CD8-positive, alpha-beta T cell (primary cell): ENCODE measurements at regions of chr4 and their contacts with region 1.

Region 1: DNA sequence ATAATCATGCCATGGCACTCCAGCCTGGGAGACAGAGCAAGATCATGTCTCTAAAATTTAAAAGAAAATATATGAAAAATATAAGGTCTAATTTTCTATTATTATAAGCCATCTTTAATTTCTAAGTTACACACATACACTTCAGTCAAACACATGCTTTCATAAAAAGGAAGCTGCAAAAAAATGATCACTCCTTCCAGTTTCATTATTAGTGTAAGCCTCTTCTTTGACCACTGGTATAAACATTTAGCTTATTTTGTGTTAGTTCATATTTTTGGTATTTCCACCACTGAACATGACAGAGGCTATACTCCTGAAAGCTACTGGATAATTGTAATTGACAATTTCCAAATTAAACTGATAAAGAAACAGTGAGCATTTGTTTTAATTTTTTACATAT is 163.3 kb upstream of the USP38 start:
- DNase-seq: no peak
- ATAC-seq: no peak
- H3K4me3 ChIP-seq: no peak overlapping the region
- H3K4me3 Mint-ChIP-seq: no peak overlapping the region
- H3K27ac ChIP-seq: no peak overlapping the region
- H3K27ac Mint-ChIP-seq: no peak overlapping the region
- H3K4me1 ChIP-seq: no peaks in the 10 kb centered on the region
- H3K4me1 Mint-ChIP-seq: no peaks in the 10 kb centered on the region
- H3K27me3 ChIP-seq: no peaks in the 10 kb centered on the region
- H3K27me3 Mint-ChIP-seq: no peaks in the 10 kb centered on the region
- CTCF ChIP-seq: no peak

Region 2: DNA sequence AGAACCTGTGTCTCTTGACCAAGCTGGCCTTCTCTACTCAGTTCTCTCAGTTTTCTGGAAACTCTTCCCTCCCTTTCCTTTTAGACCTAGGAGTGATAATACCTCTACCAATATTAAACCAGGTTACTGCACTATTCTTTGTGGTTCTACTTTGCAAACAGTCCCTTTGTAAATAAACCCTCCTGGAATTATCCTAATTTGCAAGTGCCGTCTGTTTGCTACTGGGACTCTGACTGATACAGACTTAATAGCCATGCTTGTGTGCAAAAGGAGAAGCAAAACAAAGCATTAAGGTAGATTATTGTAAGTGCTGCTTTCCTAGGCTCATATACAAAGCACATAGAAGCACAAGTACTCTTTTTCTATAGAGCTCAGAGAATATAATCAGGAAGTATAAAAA is 682.3 kb before region 1 on chr4:
- CTCF ChIA-PET with region 1: no interaction called
- POLR2A ChIA-PET with region 1: no interaction called
- intact Hi-C with region 1: no loop called
- DNase-seq: no peak
- ATAC-seq: no peak
- H3K4me3 ChIP-seq: no peak overlapping the region
- H3K4me3 Mint-ChIP-seq: no peak overlapping the region
- H3K27ac ChIP-seq: no peak overlapping the region
- H3K27ac Mint-ChIP-seq: no peak overlapping the region
- H3K4me1 ChIP-seq: no peaks in the 10 kb centered on the region
- H3K4me1 Mint-ChIP-seq: peaks cover 38% of the 10 kb centered on the region
- H3K27me3 ChIP-seq: no peaks in the 10 kb centered on the region
- H3K27me3 Mint-ChIP-seq: no peaks in the 10 kb centered on the region
- CTCF ChIP-seq: no peak

Region 3: DNA sequence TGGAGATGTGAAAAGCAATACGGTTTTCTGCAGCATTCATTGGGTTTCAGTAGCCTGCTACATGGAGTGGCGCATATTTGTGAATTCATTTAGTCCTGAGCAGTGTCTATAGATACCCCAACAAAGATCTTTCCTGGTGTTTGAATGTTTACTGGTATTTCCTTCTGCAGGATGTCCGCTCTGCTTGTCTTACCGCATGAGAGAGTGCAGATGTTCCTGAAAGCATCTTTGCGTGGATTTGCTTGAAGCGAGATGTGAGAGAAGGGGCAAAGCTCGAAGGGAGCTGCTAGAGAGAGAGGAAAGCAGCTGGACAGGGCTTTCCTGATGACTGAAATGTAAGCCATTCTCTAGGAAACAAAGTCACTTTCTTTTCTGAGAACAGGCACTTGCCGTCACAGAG is 1160.0 kb after region 1 on chr4:
- CTCF ChIA-PET with region 1: no interaction called
- POLR2A ChIA-PET with region 1: no interaction called
- intact Hi-C with region 1: loop called in 1 of 2 experiments (anchors 5 kb)
- DNase-seq: no peak
- ATAC-seq: no peak
- H3K4me3 ChIP-seq: no peak overlapping the region
- H3K4me3 Mint-ChIP-seq: no peak overlapping the region
- H3K27ac ChIP-seq: no peak overlapping the region
- H3K27ac Mint-ChIP-seq: no peak overlapping the region
- H3K4me1 ChIP-seq: no peaks in the 10 kb centered on the region
- H3K4me1 Mint-ChIP-seq: no peaks in the 10 kb centered on the region
- H3K27me3 ChIP-seq: no peaks in the 10 kb centered on the region
- H3K27me3 Mint-ChIP-seq: no peaks in the 10 kb centered on the region
- CTCF ChIP-seq: no peak